ENCODE measurements at regions of chr7 and their contacts with region 1.

Region 1: GRCh38 chr7:28452681-28453080 is 40.4 kb downstream of the CREB5 start:
- DNase-seq: no peak
- ATAC-seq: no peak

Region 2: DNA sequence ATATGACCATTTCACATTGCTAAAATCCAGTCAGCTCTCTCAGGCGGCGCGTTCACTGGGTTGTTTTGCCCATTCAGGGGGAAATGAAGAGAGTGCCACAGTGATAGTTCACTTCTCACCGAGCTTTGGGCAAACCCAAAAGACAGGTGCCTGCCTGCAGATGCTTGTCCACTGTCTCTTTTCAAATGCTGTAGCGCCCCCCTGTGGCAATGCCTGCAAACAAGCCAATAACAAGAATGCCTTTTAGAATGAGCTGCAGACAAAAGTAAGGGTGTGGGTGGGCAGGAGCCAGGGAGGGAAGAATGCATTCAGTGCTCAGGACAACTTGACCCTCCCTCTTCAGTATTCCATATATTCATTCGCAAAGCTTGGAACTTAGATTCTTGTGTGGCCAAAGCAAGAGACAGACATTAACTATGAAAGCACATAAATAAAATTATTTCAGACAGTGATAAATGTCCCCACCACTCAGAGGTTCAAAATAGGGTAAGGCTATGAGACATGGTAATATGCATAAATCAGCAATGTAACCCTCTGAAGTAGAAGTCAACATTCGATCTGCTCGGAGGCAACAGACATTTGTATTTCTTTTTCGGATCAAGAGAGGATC is 359.0 kb before region 1 on chr7:
- intact Hi-C with region 1: loop called (anchors 5 kb)
- DNase-seq: peak; percentile 82
- ATAC-seq: peak; percentile 23

Region 3: GRCh38 chr7:28408960-28409715 is 43.5 kb before region 1 on chr7:
- intact Hi-C with region 1: no loop called
- DNase-seq: peak; percentile 97
- ATAC-seq: peak; percentile 88

Region 4: DNA sequence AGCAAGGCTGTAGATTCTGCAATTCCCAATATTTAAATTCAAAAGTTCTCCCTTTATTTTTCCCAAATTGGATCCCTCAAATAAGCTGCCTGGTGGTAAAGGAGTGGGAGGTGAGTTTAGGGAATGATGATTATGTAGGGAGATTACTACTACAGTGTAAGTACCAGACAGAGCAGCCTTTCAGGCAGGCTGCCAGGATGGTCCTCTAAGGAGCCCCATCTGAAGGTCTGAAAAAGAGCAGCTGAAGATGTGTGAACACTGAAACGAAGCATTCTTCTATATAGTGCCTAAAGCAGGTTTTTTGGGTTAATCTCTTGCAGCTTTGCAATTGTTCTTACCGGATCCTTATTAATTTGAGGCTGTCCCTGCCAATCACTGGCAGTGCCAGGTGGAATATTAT is 44.3 kb after region 1 on chr7:
- intact Hi-C with region 1: no loop called
- DNase-seq: no peak
- ATAC-seq: no peak